ENCODE measurements at regions of chr12 and their contacts with region 1.

Region 1: DNA sequence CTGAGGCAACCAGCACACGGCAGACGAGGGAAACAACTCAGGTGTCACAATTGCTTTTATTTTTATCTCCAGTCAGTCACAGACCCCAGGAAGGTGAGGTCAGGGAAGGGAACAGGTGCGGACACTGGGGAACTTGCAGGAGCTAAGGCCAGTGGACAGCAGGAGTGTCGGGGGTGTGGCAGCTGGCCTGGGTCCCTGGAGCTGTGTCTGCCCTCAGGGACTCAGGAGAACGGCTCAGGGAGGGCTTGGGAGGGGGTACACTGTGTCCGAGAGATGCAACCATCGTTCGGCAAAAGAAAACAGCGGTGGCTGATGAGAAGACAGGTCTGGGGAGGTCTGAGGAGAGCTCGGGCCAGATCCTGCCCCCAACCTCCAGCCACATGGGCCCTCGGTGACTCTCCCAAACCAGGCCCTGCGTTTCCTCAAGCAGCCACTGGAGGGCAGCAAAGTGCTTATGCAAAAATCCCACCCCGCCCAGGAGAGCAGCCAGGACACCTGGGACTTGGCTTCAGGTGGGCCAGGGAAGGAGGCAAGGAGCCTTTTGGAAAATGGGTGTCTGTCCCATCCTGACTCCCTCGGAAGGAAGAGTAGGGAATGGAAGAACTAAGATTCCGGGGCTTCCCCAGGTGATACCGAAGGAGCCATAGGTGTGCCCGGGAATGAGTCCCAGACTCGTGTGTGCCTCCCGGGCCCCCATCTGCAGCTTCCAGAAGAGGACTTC is 24.1 kb upstream of the BCDIN3D start:
- DNase-seq: no peak
- H3K4me3 ChIP-seq: no peak overlapping the region
- H3K27ac ChIP-seq: no peak overlapping the region
- H3K4me1 ChIP-seq: peaks cover 10% of the 10 kb centered on the region
- H3K27me3 ChIP-seq: peaks cover 12% of the 10 kb centered on the region
- CTCF ChIP-seq: peak; percentile 90 to 99 (median 96)

Region 2: GRCh38 chr12:49730568-49731101 is 136.4 kb before region 1 on chr12:
- dilution Hi-C with region 1: no loop called
- DNase-seq: no peak
- H3K4me3 ChIP-seq: no peak overlapping the region
- H3K27ac ChIP-seq: no peak overlapping the region
- H3K4me1 ChIP-seq: no peaks in the 10 kb centered on the region
- H3K27me3 ChIP-seq: no peaks in the 10 kb centered on the region
- CTCF ChIP-seq: no peak

Region 3: DNA sequence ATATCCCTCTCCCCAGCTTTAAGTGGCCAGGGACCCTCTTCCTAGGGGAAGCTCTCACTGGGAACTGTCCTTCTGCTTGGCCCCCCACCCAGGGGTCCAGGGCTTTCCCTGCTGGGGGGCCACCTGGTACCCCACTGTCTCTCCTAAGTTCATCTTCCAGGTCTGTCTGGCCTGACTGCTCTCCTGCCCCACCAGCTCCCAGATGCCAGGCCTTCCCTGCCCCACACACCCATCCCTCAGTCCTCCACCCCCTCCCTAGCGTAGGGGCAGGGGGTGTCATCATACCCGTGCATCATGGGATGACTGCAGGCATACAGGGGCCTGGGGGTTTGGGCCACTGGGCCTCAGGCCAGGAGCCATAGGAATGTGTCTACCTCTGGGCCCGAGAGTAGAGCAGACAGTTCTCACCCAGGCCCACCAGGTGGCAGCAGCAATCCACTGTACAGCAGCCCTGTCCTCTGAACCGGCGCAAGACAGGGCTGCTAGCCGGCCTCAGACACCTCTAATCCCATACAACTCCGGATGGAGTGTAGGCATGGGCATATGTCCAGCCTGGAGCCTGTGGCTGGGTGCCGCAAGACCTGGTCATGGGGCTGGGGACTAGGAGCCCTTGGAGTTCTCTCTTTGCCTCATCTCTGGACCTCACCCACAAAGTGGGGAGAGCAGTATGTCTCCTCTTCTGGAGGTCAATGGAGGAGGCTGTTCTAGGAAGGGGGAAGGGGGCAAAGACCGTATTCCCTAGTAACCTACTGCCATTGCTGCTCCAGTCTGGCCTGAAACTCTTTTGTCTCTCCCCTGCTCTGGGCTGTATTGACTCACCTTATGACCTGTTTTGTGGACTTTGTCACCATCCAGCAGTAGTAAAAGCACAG is 208.2 kb after region 1 on chr12:
- dilution Hi-C with region 1: loop called (anchors 25 kb)
- DNase-seq: no peak
- H3K4me3 ChIP-seq: no peak overlapping the region
- H3K27ac ChIP-seq: no peak overlapping the region
- H3K4me1 ChIP-seq: peaks cover 7% of the 10 kb centered on the region
- H3K27me3 ChIP-seq: no peaks in the 10 kb centered on the region
- CTCF ChIP-seq: peak; percentile 89 to 97 (median 95)